ENCODE measurements at regions of chr2 and their contacts with region 1.

Region 1: GRCh38 chr2:44167940-44168680 is 565 bp upstream of the PPM1B start:
- DNase-seq: peak; percentile 94 to 100
- ATAC-seq: peak; percentile 89 to 97 (median 94)
- H3K4me3 ChIP-seq: peak overlapping the region; percentile 22 to 72 (median 57)
- H3K27ac ChIP-seq: peak overlapping the region; percentile 87 to 99 (median 96)
- H3K4me1 ChIP-seq: peaks cover 0 to 41% (median 33%) of the 10 kb centered on the region in 9 donors
- H3K27me3 ChIP-seq: peaks cover 0 to 9% (median 0%) of the 10 kb centered on the region in 7 donors
- CTCF ChIP-seq: no peak

Region 2: DNA sequence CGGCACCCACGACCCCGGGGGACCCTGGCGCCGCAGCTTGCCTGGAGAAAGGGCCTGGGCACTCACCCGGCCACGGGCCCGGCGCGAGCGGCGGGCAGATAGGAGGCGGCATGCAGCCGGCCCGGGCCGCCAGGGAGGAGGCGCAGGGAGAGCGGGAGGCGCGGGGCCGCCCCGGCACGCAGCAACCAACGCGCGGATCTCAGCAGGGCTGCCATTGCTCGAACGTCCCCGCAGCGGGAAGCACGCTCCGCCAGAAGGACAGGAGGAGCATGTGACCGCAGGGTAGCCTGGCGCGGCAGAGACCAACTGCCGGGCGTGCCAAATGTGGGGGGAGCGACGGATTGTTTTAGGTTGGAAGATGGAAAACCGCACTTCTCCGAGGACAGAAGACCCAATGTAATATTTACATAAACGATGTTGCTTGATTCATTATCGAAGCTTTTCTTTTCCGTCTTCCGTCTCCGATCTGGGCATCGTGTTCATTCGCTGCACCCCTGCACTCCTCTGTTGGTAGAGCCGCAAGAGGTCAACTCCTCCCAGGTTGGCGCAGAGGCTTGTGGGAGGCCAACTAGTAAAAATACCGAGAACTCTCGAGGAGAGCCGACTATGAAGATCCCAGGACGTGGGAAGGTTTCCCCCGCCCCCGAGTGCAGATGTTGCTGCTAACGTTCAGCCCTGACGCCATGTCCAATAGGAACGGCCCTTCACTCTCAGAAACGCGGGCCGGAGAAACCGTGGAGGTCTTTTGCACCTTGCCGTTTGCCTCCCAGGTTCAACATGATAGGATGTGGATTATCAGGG is 172.2 kb before region 1 on chr2 and contains the start of gene LRPPRC:
- intact Hi-C with region 1: loop called in 2 of 10 experiments (anchors 5 kb)
- DNase-seq: peak; percentile 86 to 95
- ATAC-seq: peak; percentile 97 to 99 (median 98)
- H3K4me3 ChIP-seq: peak within 1 kb of the TSS; percentile 86 to 100 (median 98)
- H3K27ac ChIP-seq: peak within 1 kb of the TSS; percentile 42 to 93 (median 84)
- H3K4me1 ChIP-seq: peaks cover 5 to 45% (median 25%) of the 10 kb centered on the region in 9 donors
- H3K27me3 ChIP-seq: no peaks in the 10 kb centered on the region
- CTCF ChIP-seq: no peak
- total RNA-seq, gene LRPPRC: 77.1 to 123 (median 114) TPM

Region 3: DNA sequence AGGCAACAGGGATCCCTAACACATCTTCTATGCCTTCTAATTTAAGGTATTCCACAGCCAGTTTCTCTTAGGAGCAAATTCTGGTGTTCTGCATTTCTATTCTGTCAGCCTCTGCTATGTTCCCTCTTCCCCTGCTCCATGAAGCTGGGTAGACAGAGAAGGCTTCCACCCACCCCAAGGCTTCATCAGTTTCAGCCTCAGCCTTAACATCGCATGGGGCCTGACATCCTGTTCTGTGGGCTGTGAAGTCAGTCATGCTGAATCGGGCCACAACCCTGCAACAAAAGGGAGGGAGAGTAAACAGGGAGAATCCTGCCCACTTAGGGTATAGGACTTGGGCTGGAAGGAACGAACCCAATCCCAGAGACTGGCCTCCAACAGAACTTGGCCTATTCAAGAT is 70.1 kb before region 1 on chr2:
- intact Hi-C with region 1: loop called in 2 of 10 experiments (anchors 10 kb)
- DNase-seq: no peak
- ATAC-seq: no peak
- H3K4me3 ChIP-seq: no peak overlapping the region
- H3K27ac ChIP-seq: no peak overlapping the region
- H3K4me1 ChIP-seq: peaks cover 0 to 17% (median 9%) of the 10 kb centered on the region in 9 donors
- H3K27me3 ChIP-seq: no peaks in the 10 kb centered on the region
- CTCF ChIP-seq: no peak

Region 4: DNA sequence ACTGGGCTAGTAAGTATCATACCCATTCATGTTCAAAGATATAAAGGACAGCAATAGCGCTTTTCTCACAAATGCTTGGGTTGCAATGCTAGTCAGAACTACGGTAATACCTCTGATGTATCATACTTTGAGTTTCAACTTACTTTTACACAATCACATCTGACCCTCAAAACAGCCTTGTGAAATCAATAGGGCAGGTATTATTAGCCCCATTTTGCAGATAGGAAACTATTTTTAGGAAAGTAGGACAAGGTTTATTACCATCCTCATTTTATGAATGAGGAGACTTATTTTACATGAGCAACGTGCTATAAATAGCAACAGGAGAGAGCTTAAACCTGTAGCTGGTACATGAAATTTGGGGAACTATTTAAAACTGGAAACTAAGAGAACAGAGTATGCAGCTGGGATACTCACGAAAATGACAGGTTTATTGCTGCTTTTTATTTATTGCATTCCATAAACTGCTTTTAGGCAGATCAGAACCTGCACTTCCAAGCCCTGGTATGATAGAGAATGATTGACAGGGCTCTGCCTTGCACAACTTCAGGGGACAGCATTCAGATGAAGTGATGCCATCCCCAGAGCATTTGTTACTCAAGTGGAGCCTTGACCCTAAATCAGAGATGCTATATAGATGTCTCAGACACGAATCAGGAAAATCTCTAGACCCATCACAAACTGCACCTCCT is 41.9 kb before region 1 on chr2:
- intact Hi-C with region 1: loop called in 1 of 10 experiments (anchors 5 kb)
- DNase-seq: no peak
- ATAC-seq: peak in 1 of 8 donors; percentile 85
- H3K4me3 ChIP-seq: no peak overlapping the region
- H3K27ac ChIP-seq: no peak overlapping the region
- H3K4me1 ChIP-seq: peaks cover 0 to 19% (median 9%) of the 10 kb centered on the region in 9 donors
- H3K27me3 ChIP-seq: no peaks in the 10 kb centered on the region
- CTCF ChIP-seq: no peak

Region 5: DNA sequence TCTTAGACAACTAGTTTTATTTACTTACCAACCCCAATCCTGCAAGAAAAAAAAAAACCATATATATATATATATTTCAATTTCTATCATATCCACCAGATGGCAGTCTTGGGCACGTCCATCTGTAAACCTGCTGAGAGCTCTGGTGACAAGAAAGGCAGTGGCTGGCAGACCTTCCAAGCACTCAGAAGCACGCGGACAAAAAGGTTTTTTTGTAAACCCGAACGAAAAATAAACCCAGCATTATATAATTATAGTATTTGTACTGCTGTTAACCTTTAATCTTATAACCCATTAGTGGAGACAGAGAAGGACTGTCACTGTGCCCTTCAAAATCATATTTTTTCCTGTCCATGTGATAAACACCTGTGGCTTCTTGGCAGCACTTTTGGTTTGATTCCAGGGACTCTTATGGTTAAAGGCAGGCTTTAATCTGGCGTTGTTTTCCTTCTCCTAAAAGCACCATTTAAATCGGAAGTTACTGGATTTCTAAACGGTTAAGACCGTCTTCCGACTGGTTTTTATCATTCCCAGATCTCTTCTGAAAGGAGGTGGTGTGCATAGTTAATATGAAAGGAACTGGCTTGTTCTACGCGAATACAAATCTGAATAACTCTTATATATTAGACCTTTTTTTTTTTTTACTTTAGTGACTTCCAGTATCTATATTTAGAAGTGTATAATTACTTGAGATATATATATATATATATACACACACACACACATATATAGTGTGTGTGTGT is 76.2 kb after region 1 on chr2:
- intact Hi-C with region 1: no loop called
- DNase-seq: peak in 1 of 2 donors; percentile 62
- ATAC-seq: peak in 7 of 8 donors; percentile 65 to 82 (median 76)
- H3K4me3 ChIP-seq: peak overlapping the region in 9 of 10 donors; percentile 5 to 55 (median 47)
- H3K27ac ChIP-seq: no peak overlapping the region
- H3K4me1 ChIP-seq: peaks cover 0 to 16% (median 6%) of the 10 kb centered on the region in 9 donors
- H3K27me3 ChIP-seq: no peaks in the 10 kb centered on the region
- CTCF ChIP-seq: peak; percentile 44 to 80 (median 68)

Region 6: GRCh38 chr2:44361330-44362206 is 193.5 kb after region 1 on chr2 and contains the starts of genes CAMKMT and PREPL:
- intact Hi-C with region 1: loop called in 5 of 10 experiments (anchors 2 to 10 kb)
- DNase-seq: peak; percentile 98 to 99
- ATAC-seq: peak; percentile 97 to 99 (median 98)
- H3K4me3 ChIP-seq: peak within 1 kb of the TSS; percentile 42 to 98 (median 88)
- H3K27ac ChIP-seq: peak within 1 kb of the TSS; percentile 93 to 99 (median 96)
- H3K4me1 ChIP-seq: peaks cover 0 to 44% (median 33%) of the 10 kb centered on the region in 9 donors
- H3K27me3 ChIP-seq: no peaks in the 10 kb centered on the region
- CTCF ChIP-seq: no peak
- total RNA-seq, gene CAMKMT: 4.1 to 6.4 (median 4.9) TPM
- total RNA-seq, gene PREPL: 69.1 to 132 (median 101) TPM

Measured in heart right ventricle (tissue), 16 donors.